PC-3 (cell line): ENCODE measurements at regions of chr1 and their contacts with region 1.

Region 1: DNA sequence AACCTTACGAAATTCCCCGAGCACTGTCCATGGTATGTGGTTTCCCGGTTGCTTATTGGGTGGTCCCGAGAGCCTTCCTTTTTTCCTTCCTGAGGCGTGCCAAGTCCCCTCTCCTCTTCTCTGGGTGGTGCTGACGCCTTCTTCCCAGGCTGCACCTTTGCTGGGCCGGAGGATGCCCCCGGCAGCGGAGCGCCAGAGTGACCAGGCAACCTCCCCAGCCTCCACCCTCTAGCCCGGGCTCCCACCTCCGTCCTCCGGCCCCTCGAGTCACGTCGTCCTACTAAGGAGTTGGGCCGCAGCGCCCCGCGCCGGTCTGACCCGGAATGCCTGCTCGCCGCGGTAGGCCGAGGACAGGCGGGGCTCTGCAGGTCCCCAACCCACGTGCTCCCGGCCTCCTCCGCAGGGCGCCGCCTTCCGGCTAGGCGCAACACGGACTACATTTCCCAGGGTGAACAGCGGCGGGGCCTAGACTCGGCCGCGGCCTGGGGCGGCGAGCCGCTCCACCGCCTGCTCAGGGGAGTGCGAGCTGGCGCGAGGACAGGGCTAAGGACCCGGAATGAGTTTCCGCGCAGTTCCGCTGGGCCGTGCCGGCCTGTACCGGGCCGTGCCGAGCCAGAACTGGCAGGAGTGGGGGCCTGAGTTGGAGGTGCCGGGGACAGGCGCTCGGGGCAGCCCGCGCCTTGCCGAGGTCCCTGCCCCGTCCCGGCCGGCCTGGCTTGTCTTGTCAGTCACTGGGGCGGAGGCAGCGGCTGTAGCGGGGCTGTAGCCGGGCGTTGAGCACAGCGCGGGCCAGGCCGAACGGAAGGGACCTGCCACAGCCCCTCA is at the start of gene IPO13:
- DNase-seq: peak; percentile 96
- ATAC-seq: peak; percentile 93
- H3K4me3 ChIP-seq: peak within 1 kb of the TSS; percentile 99
- H3K27ac ChIP-seq: peak within 1 kb of the TSS; percentile 84
- H3K4me1 ChIP-seq: peaks cover 29% of the 10 kb centered on the region
- H3K27me3 ChIP-seq: no peaks in the 10 kb centered on the region
- CTCF ChIP-seq: peak; percentile 79
- total RNA-seq, gene IPO13: 33.7 and 45.4 TPM in 2 replicates

Region 2: DNA sequence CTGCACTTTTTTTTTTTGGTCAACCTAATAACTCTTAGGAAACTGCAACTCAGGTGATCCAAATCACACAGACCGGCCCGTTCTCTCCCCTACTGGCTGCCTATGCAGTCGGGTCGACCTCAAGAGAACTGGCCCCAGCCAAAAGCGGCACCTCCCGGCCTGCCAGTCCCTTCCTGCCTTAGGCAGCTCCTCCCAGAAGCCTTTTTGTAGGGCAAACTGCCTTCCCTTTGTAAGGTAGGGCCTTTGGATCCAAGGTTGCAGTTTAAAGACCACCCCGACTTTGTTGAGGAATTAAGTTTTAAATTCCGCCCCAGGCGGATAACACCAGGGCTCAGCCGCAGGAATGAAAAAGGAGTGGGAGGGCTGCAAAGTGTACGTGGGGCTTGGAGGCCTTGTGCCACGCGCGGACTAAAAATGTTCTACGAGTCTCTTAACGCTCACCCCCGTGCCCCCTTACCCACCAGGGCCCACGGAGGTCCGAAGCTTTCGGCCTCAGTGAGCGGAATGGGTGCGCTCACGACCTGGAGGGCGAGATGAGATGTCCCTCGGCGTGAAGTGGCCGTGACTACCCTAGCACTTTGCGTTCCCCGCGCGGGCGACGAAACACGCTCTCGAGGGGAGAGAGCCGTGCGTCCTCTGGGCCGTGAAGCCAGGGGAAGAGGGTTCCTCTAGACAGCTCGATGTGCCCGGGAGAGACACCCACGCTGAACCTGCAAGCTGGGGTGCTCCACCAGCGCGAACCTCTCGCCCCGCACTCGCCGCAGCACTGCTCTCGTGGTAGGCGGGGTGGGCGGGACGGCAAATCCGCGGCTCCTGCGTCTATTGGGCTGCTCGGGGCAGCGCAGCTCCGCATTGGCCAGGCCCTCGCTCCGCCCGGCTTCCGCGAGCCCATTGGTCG is 239.6 kb before region 1 on chr1:
- CTCF ChIA-PET with region 1: no interaction called
- POLR2A ChIA-PET with region 1: no interaction called
- intact Hi-C with region 1: loop called (anchors 5 kb)
- DNase-seq: peak; percentile 94
- ATAC-seq: peak; percentile 91
- H3K4me3 ChIP-seq: peak overlapping the region; percentile 83
- H3K27ac ChIP-seq: peak overlapping the region; percentile 17; the same call in 1 of the 2 replicates
- H3K4me1 ChIP-seq: peaks cover 38% of the 10 kb centered on the region
- H3K27me3 ChIP-seq: no peaks in the 10 kb centered on the region
- CTCF ChIP-seq: no peak

Region 3: DNA sequence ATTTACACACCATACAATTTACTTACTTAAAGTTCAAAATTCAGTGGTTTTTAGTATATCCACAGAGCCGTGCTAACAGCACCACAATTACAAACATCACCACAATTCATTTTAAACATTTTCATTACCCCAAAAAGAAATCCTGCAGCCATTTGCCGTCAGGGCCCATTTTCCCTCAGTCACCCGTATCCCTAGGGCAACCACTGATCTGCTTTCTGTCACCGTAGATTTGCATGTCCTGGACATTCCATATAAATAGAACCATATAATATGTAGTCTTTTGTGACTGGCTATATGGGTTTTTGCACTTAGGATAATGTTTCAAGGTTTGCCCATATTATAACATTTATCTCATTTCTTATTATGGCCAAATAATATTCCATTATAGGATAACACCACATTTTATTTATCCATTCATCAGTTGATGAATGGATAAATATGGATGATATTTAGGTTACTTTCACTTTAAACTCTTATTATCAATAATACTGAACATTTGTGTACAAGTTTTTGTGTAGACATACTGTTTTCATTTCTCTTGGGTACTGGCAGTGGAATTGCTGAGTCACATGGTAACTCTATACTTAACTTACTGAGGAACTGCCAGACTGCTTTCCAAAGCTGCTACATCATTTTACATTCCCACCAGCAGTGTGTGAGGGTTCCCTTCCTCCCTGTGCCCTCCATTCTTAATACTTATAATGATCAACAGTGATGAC is 170.2 kb before region 1 on chr1:
- CTCF ChIA-PET with region 1: no interaction called
- POLR2A ChIA-PET with region 1: no interaction called
- intact Hi-C with region 1: no loop called
- DNase-seq: peak; percentile 58
- ATAC-seq: peak; percentile 63
- H3K4me3 ChIP-seq: no peak overlapping the region
- H3K27ac ChIP-seq: peak overlapping the region; percentile 49
- H3K4me1 ChIP-seq: peaks cover 21% of the 10 kb centered on the region
- H3K27me3 ChIP-seq: no peaks in the 10 kb centered on the region
- CTCF ChIP-seq: no peak

Region 4: DNA sequence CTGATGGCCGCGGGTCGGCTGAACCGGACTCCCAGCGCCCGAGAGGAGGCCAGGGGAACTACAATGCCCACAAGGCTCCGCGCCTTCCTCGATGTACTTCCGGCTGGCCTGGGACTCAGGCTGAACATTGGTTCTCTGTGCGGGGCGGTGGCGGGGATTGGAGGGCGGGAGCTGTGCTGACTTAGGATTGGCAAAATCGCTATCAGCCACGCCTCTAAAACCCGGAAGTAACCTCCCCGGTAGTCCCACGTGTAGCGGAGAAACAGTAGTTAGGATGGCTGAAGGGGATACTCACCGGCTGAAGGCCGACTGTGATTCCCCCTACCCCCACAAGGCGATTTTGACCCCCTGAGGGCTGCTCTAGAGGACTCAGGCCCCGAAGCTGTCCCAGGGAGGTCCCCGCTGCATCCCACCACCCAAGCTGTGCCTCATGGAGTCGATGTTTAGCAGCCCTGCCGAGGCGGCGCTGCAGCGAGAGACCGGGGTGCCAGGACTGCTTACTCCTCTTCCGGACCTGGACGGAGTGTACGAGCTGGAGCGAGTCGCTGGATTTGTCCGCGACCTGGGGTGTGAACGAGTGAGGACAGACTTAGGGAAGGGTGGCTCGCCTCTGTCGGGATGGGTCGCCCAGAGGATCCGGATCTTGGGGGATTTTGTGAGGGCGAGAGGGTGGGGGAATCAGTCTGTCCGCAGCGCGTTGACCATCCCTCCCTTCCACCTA is 23.5 kb after region 1 on chr1 and contains the start of gene DPH2:
- CTCF ChIA-PET with region 1: no interaction called
- POLR2A ChIA-PET with region 1: no interaction called
- intact Hi-C with region 1: loop called (anchors 2 kb)
- DNase-seq: peak; percentile 97
- ATAC-seq: peak; percentile 90
- H3K4me3 ChIP-seq: peak within 1 kb of the TSS; percentile 99
- H3K27ac ChIP-seq: peak within 1 kb of the TSS; percentile 23
- H3K4me1 ChIP-seq: peaks cover 18% of the 10 kb centered on the region
- H3K27me3 ChIP-seq: no peaks in the 10 kb centered on the region
- CTCF ChIP-seq: peak; percentile 35; the same call in 1 of the 2 replicates
- total RNA-seq, gene DPH2: 46.3 and 59.0 TPM in 2 replicates

Region 5: DNA sequence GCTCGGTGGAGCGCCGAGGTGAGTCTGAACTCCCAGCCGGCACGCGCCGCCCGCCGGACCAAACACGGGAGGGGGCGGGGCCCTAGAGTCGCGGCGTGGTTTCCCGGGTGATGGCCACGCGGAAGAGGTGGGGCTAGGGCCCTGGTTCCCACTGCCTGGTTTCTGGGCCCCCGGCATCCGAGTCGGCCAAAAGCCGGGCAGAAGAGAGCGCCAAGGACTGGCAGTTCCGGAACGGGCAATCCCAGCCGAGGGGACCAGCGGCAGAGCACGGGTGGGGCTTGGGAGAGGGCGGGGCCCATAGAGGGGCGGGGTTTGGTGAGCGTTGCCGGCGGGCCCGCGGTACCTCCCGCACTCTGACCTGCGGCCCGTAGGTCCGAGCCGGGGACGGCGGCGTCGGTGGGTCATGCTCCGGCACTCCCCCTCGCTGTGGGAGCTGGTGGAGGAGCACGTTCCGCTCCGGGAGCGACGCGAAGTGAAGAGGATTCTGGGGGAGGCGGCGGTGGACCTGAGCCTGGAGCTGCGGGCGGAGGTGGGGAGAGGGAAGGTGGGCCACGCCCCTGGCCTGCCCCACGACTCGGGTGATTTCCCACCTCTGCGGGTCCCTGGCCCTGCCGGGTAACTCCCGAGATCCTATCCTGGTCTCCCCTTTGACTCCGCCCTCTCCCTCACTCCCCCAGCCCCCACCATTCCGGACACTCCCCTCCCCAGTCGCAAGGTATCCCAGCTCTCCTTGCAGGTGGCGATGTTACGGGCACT is 45.2 kb after region 1 on chr1 and contains the start of gene CCDC24:
- CTCF ChIA-PET with region 1: no interaction called
- POLR2A ChIA-PET with region 1: no interaction called
- intact Hi-C with region 1: no loop called
- DNase-seq: peak; percentile 87
- ATAC-seq: peak; percentile 80
- H3K4me3 ChIP-seq: peak within 1 kb of the TSS; percentile 72
- H3K27ac ChIP-seq: peak within 1 kb of the TSS; percentile 66
- H3K4me1 ChIP-seq: peaks cover 19% of the 10 kb centered on the region
- H3K27me3 ChIP-seq: no peaks in the 10 kb centered on the region
- CTCF ChIP-seq: no peak
- total RNA-seq, gene CCDC24: 10.1 and 21.9 TPM in 2 replicates

Region 6: GRCh38 chr1:44103270-44104131 is 157.1 kb after region 1 on chr1:
- CTCF ChIA-PET with region 1: no interaction called
- POLR2A ChIA-PET with region 1: no interaction called
- intact Hi-C with region 1: no loop called
- DNase-seq: no peak
- ATAC-seq: no peak
- H3K4me3 ChIP-seq: no peak overlapping the region
- H3K27ac ChIP-seq: no peak overlapping the region
- H3K4me1 ChIP-seq: peaks cover 6% of the 10 kb centered on the region
- H3K27me3 ChIP-seq: no peaks in the 10 kb centered on the region
- CTCF ChIP-seq: no peak